ENCODE measurements at regions of chr4 and their contacts with region 1.

Region 1: DNA sequence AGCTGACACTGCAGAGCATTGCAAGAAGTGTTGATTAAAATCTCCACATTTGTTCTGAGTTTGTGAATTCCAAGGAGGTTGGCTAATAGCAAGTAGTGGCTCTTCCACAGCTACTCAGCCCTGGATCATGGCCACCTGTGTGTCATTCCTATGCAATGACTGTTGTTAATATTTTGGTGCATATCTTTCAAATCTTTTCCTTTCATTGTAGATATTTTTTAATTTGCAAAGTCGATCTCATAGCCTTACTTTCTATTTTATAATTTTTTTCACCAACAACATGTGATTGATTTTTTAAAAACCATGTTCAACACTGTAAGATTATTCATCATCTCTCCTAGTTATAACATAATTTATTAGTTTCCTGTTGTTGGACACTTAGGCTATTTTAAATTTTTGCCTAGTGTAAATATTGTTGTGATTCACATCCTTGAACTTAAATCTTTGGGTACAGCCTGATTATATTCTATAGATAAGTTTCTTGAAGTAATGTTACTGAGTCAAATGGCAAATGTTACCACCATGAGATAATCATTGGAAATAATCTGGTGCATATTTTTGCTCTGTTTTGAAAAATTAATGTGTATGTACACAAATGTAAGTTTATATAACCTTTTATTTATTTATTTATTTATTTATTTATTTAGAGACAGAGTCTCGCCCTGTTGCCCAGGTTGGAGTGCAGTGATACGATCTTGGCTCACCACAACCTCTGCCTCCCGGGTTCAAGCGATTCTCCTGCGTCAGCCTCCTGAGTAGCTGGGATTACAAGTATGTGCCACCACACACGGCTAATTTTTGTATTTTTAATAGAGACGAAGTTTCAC is 17.1 kb upstream of the ARHGAP10 start:
- DNase-seq: peak; percentile 68
- H3K4me3 Mint-ChIP-seq: no peak overlapping the region
- H3K27ac Mint-ChIP-seq: no peak overlapping the region
- H3K4me1 Mint-ChIP-seq: no peaks in the 10 kb centered on the region
- H3K27me3 Mint-ChIP-seq: no peaks in the 10 kb centered on the region
- CTCF ChIP-seq: no peak

Region 2: GRCh38 chr4:147756417-147756816 is 41.6 kb after region 1 on chr4:
- CTCF ChIA-PET with region 1: no interaction called
- POLR2A ChIA-PET with region 1: no interaction called
- intact Hi-C with region 1: no loop called
- DNase-seq: no peak
- H3K4me3 Mint-ChIP-seq: no peak overlapping the region
- H3K27ac Mint-ChIP-seq: no peak overlapping the region
- H3K4me1 Mint-ChIP-seq: peaks cover 43% of the 10 kb centered on the region
- H3K27me3 Mint-ChIP-seq: no peaks in the 10 kb centered on the region
- CTCF ChIP-seq: no peak

Region 3: DNA sequence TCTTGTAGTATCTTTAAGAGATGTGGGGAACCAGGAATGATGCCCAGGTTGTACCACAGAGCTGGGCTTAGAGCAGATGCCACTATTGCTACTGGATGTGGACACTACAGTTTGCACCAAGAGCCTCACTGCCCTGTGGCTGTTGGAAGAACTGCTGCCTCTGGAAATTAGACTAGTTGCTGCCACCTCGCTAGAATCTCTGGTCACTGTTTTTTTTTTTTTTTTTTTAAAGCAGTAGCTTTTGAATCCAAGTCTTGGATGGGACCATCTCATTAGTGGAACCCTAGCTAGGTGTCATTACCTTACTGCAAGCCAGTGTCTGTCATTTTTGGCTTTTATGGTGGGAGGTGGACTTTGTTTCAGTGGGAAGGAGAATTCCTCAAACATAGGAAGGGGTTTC is 122.6 kb after region 1 on chr4:
- CTCF ChIA-PET with region 1: interaction called, 13 read pairs
- POLR2A ChIA-PET with region 1: interaction called, 3 read pairs
- intact Hi-C with region 1: loop called (anchors 1 kb)
- DNase-seq: peak; percentile 51
- H3K4me3 Mint-ChIP-seq: no peak overlapping the region
- H3K27ac Mint-ChIP-seq: no peak overlapping the region
- H3K4me1 Mint-ChIP-seq: no peaks in the 10 kb centered on the region
- H3K27me3 Mint-ChIP-seq: no peaks in the 10 kb centered on the region
- CTCF ChIP-seq: peak; percentile 9

Measured in MCF 10A (cell line).